Panc1 (cell line): ENCODE measurements at regions of chr20 and their contacts with region 1.

Region 1: DNA sequence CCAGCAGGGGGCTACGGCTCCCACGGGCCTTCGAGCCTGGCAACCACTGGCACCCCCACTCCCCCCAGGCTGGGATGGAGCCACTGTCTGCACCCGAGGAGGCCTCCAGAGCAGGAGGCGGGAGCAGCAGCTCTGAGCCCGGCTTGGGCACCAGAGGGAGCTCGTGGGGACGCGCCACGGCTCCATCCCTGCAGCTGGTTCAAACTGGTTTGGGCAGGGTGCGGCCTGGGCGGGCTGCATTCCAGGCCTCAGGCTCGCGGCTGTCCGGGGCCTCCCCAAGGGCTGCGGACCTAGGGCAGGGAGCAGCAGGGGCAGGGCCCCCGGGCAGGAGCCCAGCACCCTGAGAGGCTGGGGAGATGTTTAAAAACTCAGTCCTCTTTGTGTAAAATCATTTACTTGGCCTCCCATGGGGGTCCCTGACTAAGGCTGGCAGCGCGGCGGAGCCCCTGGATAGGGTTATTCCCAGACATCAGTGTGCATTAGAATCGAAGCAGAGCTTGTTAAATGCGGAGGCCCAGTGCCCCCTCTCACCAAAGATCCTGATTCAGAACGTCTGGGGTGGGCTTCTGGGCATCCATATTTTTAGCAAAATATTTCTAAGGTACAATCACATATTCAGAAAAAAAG is 4.1 kb upstream of the BCAS4 start:
- DNase-seq: peak; percentile 69
- ATAC-seq: peak; percentile 82
- H3K4me3 ChIP-seq: no peak overlapping the region
- H3K27ac ChIP-seq: peak overlapping the region; percentile 99
- H3K4me1 ChIP-seq: peaks cover 58% of the 10 kb centered on the region
- H3K27me3 ChIP-seq: no peaks in the 10 kb centered on the region
- CTCF ChIP-seq: peak; percentile 95

Region 2: DNA sequence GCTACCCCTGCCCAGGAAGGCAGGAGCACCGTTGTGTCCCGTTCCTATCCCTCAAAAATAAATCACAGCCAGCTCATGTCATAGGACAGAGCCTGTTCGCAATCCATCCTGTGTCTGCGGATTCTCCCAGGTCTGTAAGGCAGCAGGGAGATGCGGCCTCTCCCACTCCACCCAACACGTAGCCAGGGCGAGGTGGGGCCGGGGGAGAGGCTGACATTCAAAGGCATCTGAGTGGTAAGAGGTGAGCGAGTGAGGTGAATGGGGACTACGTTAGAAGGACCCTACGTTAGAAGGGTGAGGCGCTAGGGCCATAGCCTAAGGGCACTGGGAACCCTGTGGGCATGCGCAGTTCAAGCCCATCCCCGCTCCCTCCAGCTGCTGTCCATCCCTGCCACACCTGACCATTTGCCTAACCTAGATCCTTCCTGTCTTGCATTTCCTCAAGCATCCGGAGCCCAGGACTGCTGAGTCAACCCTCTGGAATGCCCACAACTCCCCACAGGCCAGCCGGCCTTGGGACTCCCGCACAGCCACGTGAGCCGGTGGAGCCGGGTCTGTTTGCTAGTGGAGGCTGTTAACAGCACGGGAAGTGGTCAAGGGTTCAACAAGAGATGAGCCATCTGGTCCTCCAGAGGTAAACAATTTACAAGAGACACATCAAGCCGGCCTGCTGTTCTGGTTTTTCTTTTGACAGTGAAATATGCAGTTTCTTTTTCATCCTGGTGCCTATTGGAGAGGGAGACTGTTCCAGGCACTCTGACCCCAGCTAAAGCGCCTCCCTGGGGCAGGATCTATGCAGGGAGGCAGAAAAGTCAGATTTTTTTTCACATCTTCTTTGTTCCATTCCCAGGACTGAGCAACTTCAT is 145.3 kb before region 1 on chr20:
- CTCF ChIA-PET with region 1: no interaction called
- POLR2A ChIA-PET with region 1: no interaction called
- in situ Hi-C with region 1: no loop called
- intact Hi-C with region 1: no loop called
- DNase-seq: peak; percentile 98
- ATAC-seq: peak; percentile 92
- H3K4me3 ChIP-seq: no peak overlapping the region; a peak in 1 of 4 replicates
- H3K27ac ChIP-seq: peak overlapping the region; percentile 95
- H3K4me1 ChIP-seq: peaks cover 65% of the 10 kb centered on the region
- H3K27me3 ChIP-seq: no peaks in the 10 kb centered on the region
- CTCF ChIP-seq: no peak

Region 3: GRCh38 chr20:50663095-50663850 is 127.5 kb before region 1 on chr20:
- CTCF ChIA-PET with region 1: interaction called, 4 read pairs
- POLR2A ChIA-PET with region 1: no interaction called
- in situ Hi-C with region 1: no loop called
- intact Hi-C with region 1: loop called (anchors 5 kb)
- DNase-seq: no peak
- ATAC-seq: peak; percentile 72
- H3K4me3 ChIP-seq: no peak overlapping the region
- H3K27ac ChIP-seq: peak overlapping the region; percentile 96
- H3K4me1 ChIP-seq: peaks cover 76% of the 10 kb centered on the region
- H3K27me3 ChIP-seq: no peaks in the 10 kb centered on the region
- CTCF ChIP-seq: no peak

Region 4: GRCh38 chr20:50750145-50750671 is 40.6 kb before region 1 on chr20:
- CTCF ChIA-PET with region 1: interaction called, 18 read pairs
- POLR2A ChIA-PET with region 1: no interaction called
- in situ Hi-C with region 1: no loop called
- intact Hi-C with region 1: loop called (anchors 5 kb)
- DNase-seq: no peak
- ATAC-seq: no peak
- H3K4me3 ChIP-seq: no peak overlapping the region
- H3K27ac ChIP-seq: peak overlapping the region; percentile 94
- H3K4me1 ChIP-seq: peaks cover 88% of the 10 kb centered on the region
- H3K27me3 ChIP-seq: no peaks in the 10 kb centered on the region
- CTCF ChIP-seq: no peak

Region 5: DNA sequence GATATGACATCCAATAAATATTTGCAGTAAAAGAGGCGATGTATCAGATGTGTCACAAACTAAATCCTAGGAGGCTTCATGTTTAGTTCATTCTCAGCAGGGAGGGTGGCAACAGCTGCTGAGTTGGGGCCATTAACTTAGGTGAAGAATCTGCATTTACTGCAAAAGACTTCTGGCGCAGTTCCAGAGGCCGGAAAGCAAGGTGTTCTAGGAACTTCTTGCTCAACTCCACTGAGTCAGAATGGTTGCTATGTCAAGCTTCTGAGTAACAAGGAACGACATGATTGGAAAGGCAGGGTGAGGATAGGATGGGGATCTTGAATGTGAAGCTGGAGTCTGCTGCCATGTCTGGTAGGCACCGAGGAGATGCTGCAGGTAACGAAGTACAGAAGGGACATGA is 128.8 kb after region 1 on chr20:
- CTCF ChIA-PET with region 1: interaction called, 12 read pairs
- POLR2A ChIA-PET with region 1: no interaction called
- in situ Hi-C with region 1: no loop called
- intact Hi-C with region 1: no loop called
- DNase-seq: no peak
- ATAC-seq: no peak
- H3K4me3 ChIP-seq: no peak overlapping the region
- H3K27ac ChIP-seq: no peak overlapping the region
- H3K4me1 ChIP-seq: peaks cover 38% of the 10 kb centered on the region
- H3K27me3 ChIP-seq: no peaks in the 10 kb centered on the region
- CTCF ChIP-seq: no peak